Right ventricle myocardium inferior (tissue), 1 donor: ENCODE measurements at regions of chr7 and their contacts with region 1.

Region 1: GRCh38 chr7:2732959-2733584 is 45.1 kb downstream of the AMZ1 start:
- DNase-seq: no peak
- ATAC-seq: peak; percentile 75

Region 2: GRCh38 chr7:2821842-2822507 is 88.9 kb after region 1 on chr7:
- intact Hi-C with region 1: loop called (anchors 2 kb)
- DNase-seq: no peak
- ATAC-seq: no peak